Activated B cell treated with CpG ODN at 0.5 μM for 24 hours (primary cell): ENCODE measurements at regions of chr11 and their contacts with region 1.

Region 1: GRCh38 chr11:27362749-27363575 is at the start of gene CCDC34:
- DNase-seq: peak; percentile 84
- ATAC-seq: peak; percentile 99
- H3K4me3 Mint-ChIP-seq: peak within 1 kb of the TSS; percentile 95
- H3K27ac Mint-ChIP-seq: peak within 1 kb of the TSS; percentile 64
- H3K4me1 Mint-ChIP-seq: peaks cover 20% of the 10 kb centered on the region
- H3K27me3 Mint-ChIP-seq: no peaks in the 10 kb centered on the region
- CTCF ChIP-seq: no peak
- total RNA-seq, gene CCDC34: 2.4 and 3.7 TPM in 2 replicates

Region 2: DNA sequence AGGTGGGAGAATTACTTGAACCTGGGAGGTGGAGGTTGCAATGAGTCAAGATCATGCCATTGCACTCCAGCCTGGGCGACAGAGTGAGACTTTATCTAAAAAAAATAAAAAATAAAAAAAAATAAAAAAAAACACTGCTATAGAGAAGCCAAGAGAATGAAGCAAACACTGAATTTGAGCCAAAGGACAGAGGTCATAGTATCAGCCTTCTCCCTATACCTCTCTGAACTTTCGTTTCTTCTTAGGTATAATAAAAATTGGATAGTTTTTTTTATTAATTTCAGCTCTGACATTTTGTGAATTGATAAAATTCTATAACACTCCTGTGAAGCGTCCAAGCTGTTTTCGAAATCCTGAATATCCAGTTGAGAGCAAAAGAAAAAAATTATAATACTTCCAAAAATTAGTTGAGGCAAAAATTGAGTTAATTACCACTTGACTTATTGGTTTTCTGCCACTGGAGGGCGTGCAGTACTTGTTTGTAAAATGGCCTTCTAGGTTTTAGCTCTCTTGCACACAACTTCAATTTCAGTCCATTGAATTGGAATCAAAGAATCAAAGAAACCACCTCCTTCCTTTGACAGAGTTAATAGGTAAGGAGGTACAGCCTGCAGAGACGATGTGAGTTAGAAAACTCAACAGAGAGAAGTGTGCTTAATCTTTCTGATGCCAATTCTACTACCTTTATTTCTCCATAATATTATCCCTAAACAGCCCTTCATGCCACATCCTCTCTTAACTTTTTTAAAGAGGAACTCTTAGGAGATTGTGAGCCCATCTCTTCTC is 179.1 kb before region 1 on chr11:
- CTCF ChIA-PET with region 1: no interaction called
- POLR2A ChIA-PET with region 1: no interaction called
- intact Hi-C with region 1: loop called (anchors 10 kb)
- DNase-seq: no peak
- ATAC-seq: peak; percentile 52
- H3K4me3 Mint-ChIP-seq: no peak overlapping the region
- H3K27ac Mint-ChIP-seq: no peak overlapping the region
- H3K4me1 Mint-ChIP-seq: no peaks in the 10 kb centered on the region
- H3K27me3 Mint-ChIP-seq: peaks cover 5% of the 10 kb centered on the region
- CTCF ChIP-seq: peak; percentile 40

Region 3: GRCh38 chr11:27472398-27473016 is 109.5 kb after region 1 on chr11 and contains the start of gene LGR4:
- CTCF ChIA-PET with region 1: no interaction called
- POLR2A ChIA-PET with region 1: no interaction called
- intact Hi-C with region 1: loop called (anchors 1 kb)
- DNase-seq: peak; percentile 51
- ATAC-seq: peak; percentile 87
- H3K4me3 Mint-ChIP-seq: peak within 1 kb of the TSS; percentile 91
- H3K27ac Mint-ChIP-seq: peak within 1 kb of the TSS; percentile 75
- H3K4me1 Mint-ChIP-seq: peaks cover 32% of the 10 kb centered on the region
- H3K27me3 Mint-ChIP-seq: peaks cover 11% of the 10 kb centered on the region
- CTCF ChIP-seq: no peak
- total RNA-seq, gene LGR4: 2.4 and 3.0 TPM in 2 replicates

Region 4: GRCh38 chr11:27506200-27507182 is 143.5 kb after region 1 on chr11 and contains the start of gene LIN7C:
- CTCF ChIA-PET with region 1: no interaction called
- POLR2A ChIA-PET with region 1: interaction called, 4 read pairs
- intact Hi-C with region 1: loop called (anchors 1 kb)
- DNase-seq: peak; percentile 72
- ATAC-seq: peak; percentile 93
- H3K4me3 Mint-ChIP-seq: peak within 1 kb of the TSS; percentile 100
- H3K27ac Mint-ChIP-seq: peak within 1 kb of the TSS; percentile 98
- H3K4me1 Mint-ChIP-seq: peaks cover 45% of the 10 kb centered on the region
- H3K27me3 Mint-ChIP-seq: no peaks in the 10 kb centered on the region
- CTCF ChIP-seq: no peak
- total RNA-seq, gene LIN7C: 20.8 and 23.5 TPM in 2 replicates

Region 5: GRCh38 chr11:27563201-27563600 is 200.2 kb after region 1 on chr11:
- CTCF ChIA-PET with region 1: no interaction called
- POLR2A ChIA-PET with region 1: no interaction called
- intact Hi-C with region 1: no loop called
- DNase-seq: no peak
- ATAC-seq: no peak
- H3K4me3 Mint-ChIP-seq: no peak overlapping the region
- H3K27ac Mint-ChIP-seq: no peak overlapping the region
- H3K4me1 Mint-ChIP-seq: no peaks in the 10 kb centered on the region
- H3K27me3 Mint-ChIP-seq: no peaks in the 10 kb centered on the region
- CTCF ChIP-seq: no peak

Region 6: GRCh38 chr11:28107748-28108618 is 745.0 kb after region 1 on chr11 and contains the starts of genes KIF18A and METTL15:
- CTCF ChIA-PET with region 1: no interaction called
- POLR2A ChIA-PET with region 1: no interaction called
- intact Hi-C with region 1: loop called (anchors 1 kb)
- DNase-seq: peak; percentile 100
- ATAC-seq: peak; percentile 89
- H3K4me3 Mint-ChIP-seq: peak within 1 kb of the TSS; percentile 98
- H3K27ac Mint-ChIP-seq: peak within 1 kb of the TSS; percentile 99
- H3K4me1 Mint-ChIP-seq: peaks cover 55% of the 10 kb centered on the region
- H3K27me3 Mint-ChIP-seq: no peaks in the 10 kb centered on the region
- CTCF ChIP-seq: no peak
- total RNA-seq, gene KIF18A: 4.1 and 4.4 TPM in 2 replicates
- total RNA-seq, gene METTL15: 13.6 and 14.2 TPM in 2 replicates